HAP-1 (cell line): ENCODE measurements at regions of chrX and their contacts with region 1.

Region 1: DNA sequence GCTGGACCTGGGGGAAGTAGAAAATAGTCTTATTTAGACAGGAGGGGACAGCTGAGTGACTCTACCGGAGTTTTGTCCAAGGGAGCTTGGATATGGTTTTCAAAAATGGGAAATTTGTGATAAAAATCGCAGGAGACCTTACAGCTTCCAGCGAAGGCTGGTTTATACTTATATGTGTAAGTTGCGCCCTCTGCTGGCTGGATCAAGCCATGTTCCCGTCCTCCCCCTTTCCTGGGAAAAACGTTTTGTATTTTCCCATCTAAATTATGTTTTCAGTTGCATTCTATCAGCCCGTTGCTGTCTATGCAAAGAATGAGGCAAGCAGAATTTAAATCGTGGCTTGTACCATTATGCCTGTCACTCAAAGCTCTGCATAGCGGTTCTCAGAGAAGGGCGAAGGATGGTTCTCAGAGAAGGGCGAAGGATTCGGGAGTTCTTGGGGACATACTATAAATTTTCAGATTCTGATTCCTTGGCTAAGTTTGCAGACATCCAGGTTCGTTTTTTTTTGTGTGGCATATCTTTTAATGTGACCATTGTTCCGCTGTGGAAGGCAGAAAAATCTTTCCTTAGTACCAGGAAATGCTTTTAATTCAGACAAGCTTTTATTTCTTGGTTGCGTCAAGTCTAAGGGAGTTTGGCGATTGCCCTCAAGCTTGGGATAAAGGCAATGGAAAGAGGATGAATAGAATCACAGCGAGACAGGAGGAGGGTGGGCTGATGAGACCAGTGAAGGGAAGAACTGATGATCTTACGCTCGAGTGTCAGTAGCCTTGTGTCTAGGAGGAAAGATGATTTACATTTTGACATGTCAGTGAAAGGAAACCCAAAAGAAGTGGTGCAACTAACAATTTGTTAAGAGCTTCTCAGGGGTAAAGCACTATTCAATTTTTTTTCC is 128.5 kb upstream of the ARX start:
- DNase-seq: peak; percentile 73 to 89
- H3K4me3 ChIP-seq: peak overlapping the region; percentile 4; the same call in 1 of the 2 replicates
- H3K4me1 ChIP-seq: peaks cover 19% of the 10 kb centered on the region
- H3K27me3 ChIP-seq: no peaks in the 10 kb centered on the region

Region 2: GRCh38 chrX:24828147-24828546 is 316.1 kb before region 1 on chrX:
- in situ Hi-C with region 1: loop called (anchors 10 kb)
- DNase-seq: no peak
- H3K4me3 ChIP-seq: no peak overlapping the region
- H3K4me1 ChIP-seq: peaks cover 17% of the 10 kb centered on the region
- H3K27me3 ChIP-seq: no peaks in the 10 kb centered on the region

Region 3: DNA sequence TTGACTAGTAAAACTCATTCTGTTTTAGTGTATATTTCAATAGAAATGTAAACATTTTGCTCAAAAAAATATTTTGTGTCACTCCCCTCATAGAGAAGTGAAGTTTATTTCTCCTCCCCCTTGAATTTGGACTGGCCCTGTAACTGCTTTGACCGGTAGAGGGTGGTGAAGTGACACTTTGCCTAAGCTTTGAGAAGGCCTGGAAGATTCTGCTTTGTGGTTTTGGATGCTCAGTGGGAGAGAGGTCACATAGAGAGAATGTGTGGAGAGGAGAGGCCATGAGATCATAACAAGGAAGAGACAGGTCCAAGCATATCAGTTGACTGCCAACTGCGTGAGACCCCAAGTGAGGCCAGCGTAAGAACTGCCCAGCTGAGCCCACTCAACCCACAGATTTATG is 109.4 kb before region 1 on chrX:
- in situ Hi-C with region 1: loop called (anchors 5 kb)
- DNase-seq: peak; percentile 65 to 75
- H3K4me3 ChIP-seq: no peak overlapping the region
- H3K4me1 ChIP-seq: no peaks in the 10 kb centered on the region; the same call in 1 of the 2 replicates
- H3K27me3 ChIP-seq: no peaks in the 10 kb centered on the region

Region 4: GRCh38 chrX:25059273-25059672 is 85.0 kb before region 1 on chrX:
- in situ Hi-C with region 1: no loop called
- DNase-seq: no peak
- H3K4me3 ChIP-seq: no peak overlapping the region
- H3K4me1 ChIP-seq: peaks cover 3% of the 10 kb centered on the region; the same call in 1 of the 2 replicates
- H3K27me3 ChIP-seq: no peaks in the 10 kb centered on the region